Psoas muscle (tissue), 8 donors: ENCODE measurements at regions of chr5 and their contacts with region 1.

Region 1: DNA sequence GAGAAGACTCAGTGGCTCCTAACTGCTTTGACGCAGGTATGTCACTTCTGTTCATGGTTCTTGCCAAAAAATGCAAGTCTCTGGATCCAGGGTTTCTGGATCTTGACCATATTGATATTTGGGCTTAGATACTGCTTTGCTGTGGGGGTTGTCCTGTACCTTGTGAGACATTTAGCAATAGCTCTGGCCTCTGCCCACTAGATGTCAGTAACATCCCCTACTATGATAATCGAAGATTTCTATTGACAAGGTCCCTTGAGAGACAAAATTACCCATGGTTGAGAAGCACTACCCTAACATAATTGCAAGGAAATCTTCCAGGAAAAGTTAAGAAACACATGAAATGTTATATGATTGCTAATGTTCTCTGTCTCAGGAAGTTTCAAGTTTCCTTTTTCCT is 285.4 kb downstream of the TMEM232 start:
- DNase-seq: no peak
- ATAC-seq: peak in 3 of 4 donors; percentile 54 to 86 (median 57)
- H3K4me3 ChIP-seq: no peak overlapping the region
- H3K27ac ChIP-seq: no peak overlapping the region
- H3K4me1 ChIP-seq: peaks cover 11% of the 10 kb centered on the region
- H3K27me3 ChIP-seq: no peaks in the 10 kb centered on the region
- CTCF ChIP-seq: peak; percentile 38

Region 2: GRCh38 chr5:110590187-110590586 is 149.2 kb after region 1 on chr5:
- intact Hi-C with region 1: loop called (anchors 10 kb)
- DNase-seq: no peak
- ATAC-seq: peak in 1 of 4 donors; percentile 69
- H3K4me3 ChIP-seq: no peak overlapping the region
- H3K27ac ChIP-seq: no peak overlapping the region
- H3K4me1 ChIP-seq: no peaks in the 10 kb centered on the region
- H3K27me3 ChIP-seq: no peaks in the 10 kb centered on the region
- CTCF ChIP-seq: peak; percentile 39

Region 3: GRCh38 chr5:110630350-110630749 is 189.3 kb after region 1 on chr5:
- intact Hi-C with region 1: loop called in 1 of 2 experiments (anchors 5 kb)
- DNase-seq: no peak
- ATAC-seq: no peak
- H3K4me3 ChIP-seq: no peak overlapping the region
- H3K27ac ChIP-seq: no peak overlapping the region
- H3K4me1 ChIP-seq: no peaks in the 10 kb centered on the region
- H3K27me3 ChIP-seq: no peaks in the 10 kb centered on the region
- CTCF ChIP-seq: no peak

Region 4: DNA sequence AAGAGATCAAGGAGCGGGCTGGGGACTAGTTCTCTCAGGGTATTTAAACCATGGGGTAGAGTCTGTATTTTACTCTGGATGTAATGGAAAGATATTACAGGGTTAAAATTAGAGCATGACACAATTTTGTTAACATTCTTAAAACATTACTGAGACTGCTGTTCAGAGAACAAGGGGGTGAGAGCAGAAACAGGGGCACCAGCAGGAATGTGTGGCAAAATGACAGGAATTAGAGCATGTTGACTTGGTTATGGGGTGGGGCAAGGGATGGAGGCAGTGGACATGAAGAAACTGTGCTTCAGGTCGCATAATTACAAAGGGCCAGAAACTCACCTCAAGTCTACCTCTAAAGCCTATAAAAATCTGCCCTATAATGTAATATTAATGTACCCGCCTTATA is 210.5 kb after region 1 on chr5:
- intact Hi-C with region 1: no loop called
- DNase-seq: no peak
- ATAC-seq: no peak
- H3K4me3 ChIP-seq: no peak overlapping the region
- H3K27ac ChIP-seq: no peak overlapping the region
- H3K4me1 ChIP-seq: no peaks in the 10 kb centered on the region
- H3K27me3 ChIP-seq: no peaks in the 10 kb centered on the region
- CTCF ChIP-seq: no peak